GM12878 (cell line): ENCODE measurements at regions of chr6 and their contacts with region 1.

Region 1: DNA sequence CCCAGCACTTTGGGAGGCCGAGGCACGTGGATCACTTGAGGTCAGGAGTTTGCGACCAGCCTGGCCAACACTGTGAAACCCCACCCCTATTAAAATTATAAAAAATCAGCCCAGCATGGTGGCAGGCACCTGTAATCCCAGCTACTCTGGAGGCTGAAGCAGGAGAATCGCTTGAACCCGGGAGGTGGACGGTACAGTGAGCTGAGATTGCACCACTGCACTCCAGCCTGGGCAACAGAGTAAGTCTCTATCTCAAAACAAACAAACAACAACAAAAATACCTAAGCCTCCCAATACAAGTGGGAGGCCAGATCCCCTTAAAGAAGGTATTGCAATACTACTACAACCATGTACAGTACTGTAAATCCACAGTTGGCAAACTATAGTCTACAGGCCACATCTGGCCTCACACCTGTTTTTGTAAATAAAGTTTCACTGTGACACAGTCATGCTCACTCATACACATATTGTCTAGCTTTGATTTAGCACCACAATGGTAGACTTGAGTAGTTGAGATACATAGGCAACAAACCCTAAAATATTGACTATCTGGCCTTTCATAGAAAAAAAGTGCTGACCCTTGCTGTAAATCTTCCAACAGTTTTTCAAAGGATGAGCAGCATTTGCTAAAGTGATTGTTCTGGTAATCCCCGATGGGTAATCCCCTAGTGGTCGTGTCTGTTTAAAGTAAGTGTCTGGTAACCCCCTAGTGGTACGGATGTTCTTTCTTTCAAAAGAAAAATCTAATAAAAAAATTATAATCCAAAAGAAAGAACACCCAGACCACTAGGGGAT is 202.0 kb downstream of the RNGTT start:
- DNase-seq: peak; percentile 77
- ATAC-seq: peak; percentile 80
- H3K4me3 ChIP-seq: no peak overlapping the region
- H3K27ac ChIP-seq: peak overlapping the region; percentile 94
- H3K4me1 ChIP-seq: peaks cover 13% of the 10 kb centered on the region
- H3K27me3 ChIP-seq: no peaks in the 10 kb centered on the region
- CTCF ChIP-seq: peak; percentile 26 to 42 (median 37); a peak in 4 of 6 replicates
- EP300 ChIP-seq: peak; percentile 56 to 67; a peak in 2 of 4 replicates
- POLR2A ChIP-seq: no peak
- RAD21 ChIP-seq: peak; percentile 71

Region 2: DNA sequence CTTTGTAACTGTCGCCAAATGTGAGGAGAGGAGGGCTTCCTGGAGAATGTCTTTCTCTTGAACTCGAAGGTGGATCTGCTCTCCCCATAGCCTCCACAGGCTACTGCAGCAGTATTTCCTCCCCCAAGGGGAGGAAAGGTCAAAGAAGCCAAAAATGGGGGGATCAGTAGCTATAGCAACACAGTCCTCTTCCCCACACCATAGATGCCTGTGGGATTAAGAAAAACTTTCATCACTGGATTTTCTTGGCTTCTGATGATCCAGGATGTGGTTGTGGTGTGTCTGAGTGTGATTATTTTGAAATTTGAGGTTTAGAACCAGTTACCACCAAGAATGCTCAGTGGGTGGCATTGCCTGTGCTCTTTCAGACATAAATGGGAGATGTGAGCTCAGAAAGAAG is 853.9 kb before region 1 on chr6:
- CTCF ChIA-PET with region 1: no interaction called
- POLR2A ChIA-PET with region 1: no interaction called
- RAD21 ChIA-PET with region 1: no interaction called
- SMC1A ChIA-PET with region 1: no interaction called
- in situ Hi-C with region 1: no loop called
- intact Hi-C with region 1: no loop called
- DNase-seq: peak; percentile 63
- ATAC-seq: peak; percentile 77
- H3K4me3 ChIP-seq: no peak overlapping the region
- H3K27ac ChIP-seq: peak overlapping the region; percentile 50; the same call in 1 of the 2 replicates
- H3K4me1 ChIP-seq: peaks cover 55% of the 10 kb centered on the region
- H3K27me3 ChIP-seq: no peaks in the 10 kb centered on the region
- CTCF ChIP-seq: no peak
- EP300 ChIP-seq: peak in 1 of 2 experiments; percentile 66; a peak in 2 of 4 replicates
- POLR2A ChIP-seq: no peak
- RAD21 ChIP-seq: 0 out of 2 replicates have a peak, but pooled peaks have one; percentile 6

Region 3: DNA sequence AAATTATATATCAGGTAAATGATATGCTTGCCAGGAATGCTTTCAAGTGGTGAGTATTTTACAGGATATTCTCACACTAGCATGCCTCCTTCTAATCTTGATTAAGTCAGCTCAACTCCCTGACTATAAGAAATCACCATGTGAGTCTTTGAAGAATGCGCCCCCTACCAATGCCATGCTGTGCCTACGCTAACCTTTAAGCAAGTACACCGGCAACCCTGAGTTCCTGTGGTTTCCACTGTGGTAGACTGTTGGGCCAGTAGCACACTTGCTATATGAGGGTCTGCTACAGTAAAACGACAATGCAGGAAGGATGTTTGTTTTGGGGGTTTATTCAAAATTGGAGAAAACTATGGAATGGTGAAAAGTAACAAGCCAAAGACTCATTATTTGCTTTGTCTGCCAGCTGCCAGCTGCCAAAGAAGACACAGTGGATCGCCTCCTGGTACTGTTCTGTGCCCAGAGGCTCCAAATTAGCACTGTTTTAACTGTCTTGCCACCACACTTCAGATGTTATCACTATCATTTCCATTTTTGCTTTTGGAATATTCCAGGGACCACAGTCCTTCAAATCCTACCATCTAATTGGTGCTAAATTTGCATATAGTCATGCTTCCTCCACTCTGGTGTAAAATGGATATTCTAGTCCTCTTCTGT is 131.5 kb before region 1 on chr6:
- CTCF ChIA-PET with region 1: interaction called, 7 read pairs
- POLR2A ChIA-PET with region 1: interaction called, 6 read pairs
- RAD21 ChIA-PET with region 1: interaction called, 12 read pairs
- SMC1A ChIA-PET with region 1: interaction called, 24 read pairs
- in situ Hi-C with region 1: no loop called
- intact Hi-C with region 1: no loop called
- DNase-seq: no peak
- ATAC-seq: peak; percentile 84
- H3K4me3 ChIP-seq: no peak overlapping the region
- H3K27ac ChIP-seq: no peak overlapping the region; the same call in 1 of the 2 replicates
- H3K4me1 ChIP-seq: peaks cover 7% of the 10 kb centered on the region; the same call in 1 of the 2 replicates
- H3K27me3 ChIP-seq: no peaks in the 10 kb centered on the region
- CTCF ChIP-seq: peak; percentile 14 to 28 (median 23); a peak in 3 of 6 replicates
- EP300 ChIP-seq: no peak
- POLR2A ChIP-seq: no peak
- RAD21 ChIP-seq: peak; percentile 39; the same call in 1 of the 2 replicates

Region 4: DNA sequence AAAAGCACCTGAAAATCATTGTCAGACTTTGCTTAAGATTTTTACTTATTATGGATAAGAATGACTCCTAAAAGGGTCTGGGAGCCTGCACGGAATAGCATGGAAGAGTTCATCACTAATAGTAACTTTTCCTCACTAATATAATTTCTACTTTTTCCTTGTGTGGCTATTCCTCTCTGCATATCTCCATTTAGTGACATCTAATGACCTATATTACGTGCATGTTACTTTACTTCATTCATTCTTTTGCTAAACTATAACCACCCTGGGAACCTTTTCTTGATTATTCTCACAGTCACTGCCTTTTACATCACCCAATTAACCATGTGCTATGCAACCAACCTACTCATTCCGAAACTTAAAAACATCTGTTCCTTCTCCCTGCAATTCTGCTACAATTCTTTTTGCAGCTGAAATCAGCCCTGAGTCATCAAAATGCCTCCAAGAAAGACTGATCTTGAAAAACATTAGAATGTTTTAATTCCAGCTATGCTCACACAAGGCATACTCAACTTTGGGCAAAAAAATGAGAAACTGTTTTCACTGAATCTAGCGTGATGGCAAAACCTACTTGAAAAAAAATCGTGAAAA is 111.3 kb before region 1 on chr6:
- CTCF ChIA-PET with region 1: interaction called, 3 read pairs
- POLR2A ChIA-PET with region 1: interaction called, 5 read pairs
- RAD21 ChIA-PET with region 1: interaction called, 31 read pairs
- SMC1A ChIA-PET with region 1: interaction called, 12 read pairs
- in situ Hi-C with region 1: no loop called
- intact Hi-C with region 1: loop called (anchors 2 kb)
- DNase-seq: peak; percentile 97
- ATAC-seq: peak; percentile 94
- H3K4me3 ChIP-seq: no peak overlapping the region
- H3K27ac ChIP-seq: peak overlapping the region; percentile 83
- H3K4me1 ChIP-seq: peaks cover 11% of the 10 kb centered on the region
- H3K27me3 ChIP-seq: no peaks in the 10 kb centered on the region
- CTCF ChIP-seq: no peak
- EP300 ChIP-seq: peak in 1 of 2 experiments; percentile 94
- POLR2A ChIP-seq: no peak
- RAD21 ChIP-seq: peak; percentile 41

Region 5: GRCh38 chr6:88725111-88725975 is 36.1 kb before region 1 on chr6:
- CTCF ChIA-PET with region 1: no interaction called
- POLR2A ChIA-PET with region 1: no interaction called
- RAD21 ChIA-PET with region 1: interaction called, 10 read pairs
- SMC1A ChIA-PET with region 1: interaction called, 11 read pairs
- in situ Hi-C with region 1: no loop called
- intact Hi-C with region 1: no loop called
- DNase-seq: peak; percentile 26
- ATAC-seq: peak; percentile 42
- H3K4me3 ChIP-seq: no peak overlapping the region
- H3K27ac ChIP-seq: peak overlapping the region; percentile 30; the same call in 1 of the 2 replicates
- H3K4me1 ChIP-seq: no peaks in the 10 kb centered on the region; the same call in 1 of the 2 replicates
- H3K27me3 ChIP-seq: no peaks in the 10 kb centered on the region
- CTCF ChIP-seq: no peak
- EP300 ChIP-seq: no peak
- POLR2A ChIP-seq: no peak
- RAD21 ChIP-seq: 0 out of 2 replicates have a peak, but pooled peaks have one; percentile 6

Region 6: DNA sequence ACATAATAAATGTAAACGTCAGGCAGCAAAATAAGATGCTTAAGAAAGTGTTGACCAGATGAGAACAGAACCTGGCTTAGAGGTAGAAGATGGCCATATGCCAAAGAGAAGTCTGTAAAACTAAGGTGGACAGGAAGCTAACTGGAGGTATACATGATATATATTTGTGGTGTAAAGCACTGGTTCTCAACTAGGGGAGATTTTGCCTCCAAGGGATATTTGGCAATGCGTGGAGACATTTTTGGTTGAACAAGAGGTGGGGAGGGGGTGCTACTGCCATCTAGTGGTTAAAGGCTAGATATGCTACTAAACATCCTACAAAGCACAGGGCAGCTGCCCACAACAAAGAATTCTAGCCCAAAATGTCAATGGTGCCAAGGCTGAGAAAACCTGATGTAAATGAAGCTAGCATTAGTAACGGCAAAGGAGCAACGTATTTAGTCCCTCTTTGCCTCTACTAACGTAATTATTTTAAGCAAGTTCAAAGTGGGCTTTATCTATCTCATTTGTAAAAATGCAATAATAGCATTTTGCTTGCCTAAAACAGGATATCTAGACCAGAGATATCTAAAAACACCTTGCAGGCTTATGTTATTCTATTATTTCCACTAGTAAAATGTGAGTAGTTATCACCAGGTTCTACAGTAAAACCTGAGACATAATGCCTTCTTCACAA is 19.4 kb after region 1 on chr6:
- CTCF ChIA-PET with region 1: interaction called, 8 read pairs
- POLR2A ChIA-PET with region 1: interaction called, 3 read pairs
- RAD21 ChIA-PET with region 1: interaction called, 6 read pairs
- SMC1A ChIA-PET with region 1: interaction called, 10 read pairs
- in situ Hi-C with region 1: no loop called
- intact Hi-C with region 1: no loop called
- DNase-seq: peak; percentile 63
- ATAC-seq: peak; percentile 90
- H3K4me3 ChIP-seq: no peak overlapping the region
- H3K27ac ChIP-seq: no peak overlapping the region
- H3K4me1 ChIP-seq: no peaks in the 10 kb centered on the region
- H3K27me3 ChIP-seq: no peaks in the 10 kb centered on the region
- CTCF ChIP-seq: peak; percentile 60 to 68 (median 67); a peak in 5 of 6 replicates
- EP300 ChIP-seq: no peak
- POLR2A ChIP-seq: no peak
- RAD21 ChIP-seq: peak; percentile 88

Region 7: GRCh38 chr6:88877893-88878292 is 116.5 kb after region 1 on chr6:
- CTCF ChIA-PET with region 1: no interaction called
- POLR2A ChIA-PET with region 1: no interaction called
- RAD21 ChIA-PET with region 1: no interaction called
- SMC1A ChIA-PET with region 1: no interaction called
- in situ Hi-C with region 1: no loop called
- intact Hi-C with region 1: no loop called
- DNase-seq: no peak
- ATAC-seq: no peak
- H3K4me3 ChIP-seq: no peak overlapping the region
- H3K27ac ChIP-seq: no peak overlapping the region
- H3K4me1 ChIP-seq: peaks cover 5% of the 10 kb centered on the region; the same call in 1 of the 2 replicates
- H3K27me3 ChIP-seq: no peaks in the 10 kb centered on the region
- CTCF ChIP-seq: no peak
- EP300 ChIP-seq: no peak
- POLR2A ChIP-seq: no peak
- RAD21 ChIP-seq: no peak